MCF 10A (cell line): ENCODE measurements at regions of chr5 and their contacts with region 1.

Region 1: DNA sequence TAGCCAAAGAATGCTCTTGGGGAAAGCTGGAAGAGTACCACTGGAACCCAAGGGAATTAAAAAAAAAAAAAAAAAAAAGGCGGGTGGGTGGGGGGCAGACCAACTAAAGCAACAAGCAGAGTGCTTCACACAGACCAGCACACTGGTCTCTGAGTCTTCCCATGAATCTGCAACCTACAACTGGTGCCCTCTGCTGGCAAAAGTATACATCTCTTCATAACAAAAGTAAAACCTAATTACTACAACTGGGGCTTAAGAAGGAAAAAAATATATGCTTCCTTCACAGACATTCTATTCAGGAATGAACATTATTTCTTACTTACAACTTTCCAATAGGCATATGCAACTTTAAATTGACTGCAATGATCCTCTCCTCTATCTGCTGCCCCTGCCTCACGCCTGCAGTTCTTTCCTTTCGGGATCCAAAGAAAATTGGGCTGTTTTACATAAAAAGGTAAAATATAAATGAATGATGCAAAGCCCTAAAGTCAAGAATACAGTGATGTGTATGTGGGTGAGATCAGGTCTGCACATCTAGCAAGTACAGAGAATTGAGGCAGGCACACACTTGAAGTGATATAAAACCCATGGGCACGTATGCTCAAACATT is 7.2 kb upstream of the KLHL3 start:
- DNase-seq: peak; percentile 91
- H3K4me3 Mint-ChIP-seq: no peak overlapping the region
- H3K27ac Mint-ChIP-seq: no peak overlapping the region
- H3K4me1 Mint-ChIP-seq: no peaks in the 10 kb centered on the region
- H3K27me3 Mint-ChIP-seq: no peaks in the 10 kb centered on the region
- CTCF ChIP-seq: peak; percentile 62

Region 2: GRCh38 chr5:137395008-137395755 is 348.0 kb before region 1 on chr5:
- CTCF ChIA-PET with region 1: no interaction called
- POLR2A ChIA-PET with region 1: no interaction called
- intact Hi-C with region 1: no loop called
- DNase-seq: peak; percentile 27
- H3K4me3 Mint-ChIP-seq: no peak overlapping the region
- H3K27ac Mint-ChIP-seq: peak overlapping the region; percentile 10
- H3K4me1 Mint-ChIP-seq: peaks cover 18% of the 10 kb centered on the region
- H3K27me3 Mint-ChIP-seq: no peaks in the 10 kb centered on the region
- CTCF ChIP-seq: no peak

Region 3: DNA sequence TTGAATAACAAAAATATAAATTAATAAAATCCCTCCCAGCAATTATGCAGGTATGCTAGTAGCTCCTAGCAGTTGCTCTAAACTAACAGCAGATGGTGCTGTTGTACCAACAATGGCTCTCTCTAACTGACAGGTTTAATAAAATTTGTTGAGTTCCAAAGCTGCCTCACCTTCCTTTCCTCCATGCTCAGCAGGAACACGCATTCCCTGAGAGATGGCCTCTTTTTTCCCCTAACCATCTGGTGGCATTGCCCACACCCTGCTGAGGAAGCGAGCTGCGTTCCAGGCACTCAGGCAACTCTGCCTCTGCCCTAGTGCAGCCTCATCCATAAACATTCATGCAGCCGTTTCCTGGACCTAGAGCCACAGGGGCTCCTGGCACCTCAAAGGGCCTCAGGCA is 113.5 kb before region 1 on chr5:
- CTCF ChIA-PET with region 1: interaction called, 690 read pairs
- POLR2A ChIA-PET with region 1: interaction called, 19 read pairs
- intact Hi-C with region 1: loop called (anchors 1 kb)
- DNase-seq: peak; percentile 87
- H3K4me3 Mint-ChIP-seq: no peak overlapping the region
- H3K27ac Mint-ChIP-seq: no peak overlapping the region
- H3K4me1 Mint-ChIP-seq: no peaks in the 10 kb centered on the region
- H3K27me3 Mint-ChIP-seq: no peaks in the 10 kb centered on the region
- CTCF ChIP-seq: peak; percentile 99

Region 4: DNA sequence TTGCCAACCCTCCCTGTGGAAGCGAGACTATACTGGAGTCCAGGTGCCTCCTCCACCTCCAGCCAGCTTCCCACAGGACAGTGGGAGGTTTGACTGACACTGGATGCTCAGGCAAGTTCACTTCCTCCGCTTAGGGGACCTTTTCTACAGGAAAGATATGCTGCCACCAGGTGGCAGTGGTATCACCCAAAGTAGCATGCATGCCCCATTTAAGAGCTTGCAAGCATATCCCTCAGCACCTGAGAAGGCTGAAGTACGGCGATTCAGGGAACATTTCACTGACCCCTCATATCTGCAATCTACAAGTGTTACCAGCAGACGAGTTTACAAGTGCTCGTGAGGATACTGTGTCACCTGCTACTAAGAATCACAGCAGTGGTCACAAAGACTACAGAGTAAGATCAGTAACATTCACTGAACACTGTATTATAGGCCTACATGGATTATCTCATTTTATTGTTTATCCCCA is 82.8 kb before region 1 on chr5:
- CTCF ChIA-PET with region 1: interaction called, 236 read pairs
- POLR2A ChIA-PET with region 1: interaction called, 10 read pairs
- intact Hi-C with region 1: loop called (anchors 1 kb)
- DNase-seq: peak; percentile 85
- H3K4me3 Mint-ChIP-seq: no peak overlapping the region
- H3K27ac Mint-ChIP-seq: no peak overlapping the region
- H3K4me1 Mint-ChIP-seq: no peaks in the 10 kb centered on the region
- H3K27me3 Mint-ChIP-seq: peaks cover 10% of the 10 kb centered on the region
- CTCF ChIP-seq: peak; percentile 80

Region 5: DNA sequence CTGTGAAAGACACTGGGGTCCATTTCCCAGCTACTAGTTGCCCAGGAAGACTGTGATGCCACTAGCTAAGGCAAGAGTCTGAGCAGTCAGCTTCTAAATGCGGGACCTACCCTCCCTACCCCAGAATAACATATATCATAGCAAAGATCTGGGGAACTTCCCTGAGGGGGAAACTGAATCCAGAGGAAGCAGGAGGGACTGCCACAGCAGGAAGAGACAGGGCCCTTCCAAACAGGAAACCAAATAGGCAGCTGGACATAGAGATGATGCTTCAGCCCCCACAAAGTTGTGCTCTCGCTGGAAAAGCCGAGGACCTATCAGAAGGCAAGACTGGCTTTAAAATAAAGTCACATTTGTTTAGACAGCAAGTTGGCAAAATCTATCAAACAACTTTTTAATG is 58.4 kb before region 1 on chr5:
- CTCF ChIA-PET with region 1: interaction called, 11 read pairs
- POLR2A ChIA-PET with region 1: no interaction called
- intact Hi-C with region 1: no loop called
- DNase-seq: no peak
- H3K4me3 Mint-ChIP-seq: no peak overlapping the region
- H3K27ac Mint-ChIP-seq: no peak overlapping the region
- H3K4me1 Mint-ChIP-seq: no peaks in the 10 kb centered on the region
- H3K27me3 Mint-ChIP-seq: peaks cover 54% of the 10 kb centered on the region
- CTCF ChIP-seq: no peak

Region 6: GRCh38 chr5:137718611-137719010 is 24.5 kb before region 1 on chr5:
- CTCF ChIA-PET with region 1: interaction called, 35 read pairs
- POLR2A ChIA-PET with region 1: no interaction called
- intact Hi-C with region 1: no loop called
- DNase-seq: no peak
- H3K4me3 Mint-ChIP-seq: no peak overlapping the region
- H3K27ac Mint-ChIP-seq: no peak overlapping the region
- H3K4me1 Mint-ChIP-seq: no peaks in the 10 kb centered on the region
- H3K27me3 Mint-ChIP-seq: peaks cover 21% of the 10 kb centered on the region
- CTCF ChIP-seq: no peak

Region 7: DNA sequence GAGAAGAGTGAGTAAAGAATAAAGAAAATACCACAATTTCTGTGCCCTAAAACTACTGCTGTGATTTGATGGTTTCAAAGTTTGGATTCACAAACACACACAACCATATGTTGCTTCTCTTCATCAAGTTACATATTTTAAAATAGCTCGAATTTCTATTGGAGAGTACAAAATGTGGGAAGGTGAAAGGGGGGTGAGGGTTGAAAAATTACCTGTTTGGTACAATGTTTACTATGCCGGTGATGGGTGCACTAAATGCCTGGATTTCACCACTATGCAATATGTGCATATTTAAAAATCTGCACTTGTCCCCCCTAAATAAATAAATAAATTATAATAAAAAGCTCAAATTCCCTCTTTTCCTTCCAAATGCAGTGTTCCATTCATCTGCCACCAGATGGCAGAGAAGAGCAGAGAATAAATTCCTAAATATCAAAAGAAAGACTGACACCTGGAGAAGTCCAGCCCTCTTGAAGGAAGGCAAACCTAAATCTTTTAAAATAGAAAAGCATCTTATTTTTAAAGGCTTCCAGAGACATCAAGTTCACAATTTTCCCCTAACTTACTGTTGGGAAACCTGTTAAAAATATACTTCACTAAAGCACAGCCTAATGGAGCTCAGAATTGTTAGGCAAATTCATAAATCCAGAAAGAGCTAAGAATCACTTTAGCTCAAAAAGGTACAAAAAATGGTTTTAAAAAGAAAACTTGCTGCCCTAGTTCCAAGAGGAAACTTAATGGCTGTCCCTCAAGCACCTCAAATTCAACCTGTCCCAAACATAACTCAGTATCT is 35.8 kb after region 1 on chr5:
- CTCF ChIA-PET with region 1: interaction called, 27 read pairs
- POLR2A ChIA-PET with region 1: no interaction called
- intact Hi-C with region 1: no loop called
- DNase-seq: peak; percentile 82
- H3K4me3 Mint-ChIP-seq: no peak overlapping the region
- H3K27ac Mint-ChIP-seq: no peak overlapping the region
- H3K4me1 Mint-ChIP-seq: no peaks in the 10 kb centered on the region
- H3K27me3 Mint-ChIP-seq: peaks cover 24% of the 10 kb centered on the region
- CTCF ChIP-seq: peak; percentile 86

Region 8: GRCh38 chr5:138096363-138096762 is 353.2 kb after region 1 on chr5:
- CTCF ChIA-PET with region 1: no interaction called
- POLR2A ChIA-PET with region 1: no interaction called
- intact Hi-C with region 1: no loop called
- DNase-seq: no peak
- H3K4me3 Mint-ChIP-seq: no peak overlapping the region
- H3K27ac Mint-ChIP-seq: no peak overlapping the region
- H3K4me1 Mint-ChIP-seq: no peaks in the 10 kb centered on the region
- H3K27me3 Mint-ChIP-seq: peaks cover 89% of the 10 kb centered on the region
- CTCF ChIP-seq: no peak